HEK293 (cell line): ENCODE measurements at regions of chr12 and their contacts with region 1.

Region 1: GRCh38 chr12:8609061-8609570 is 3.5 kb downstream of the AICDA start:
- H3K4me3 ChIP-seq: no peak overlapping the region
- H3K27ac ChIP-seq: no peak overlapping the region
- H3K4me1 ChIP-seq: no peaks in the 10 kb centered on the region
- CTCF ChIP-seq: peak; percentile 25; the same call in 1 of the 2 replicates

Region 2: GRCh38 chr12:8554451-8555195 is 54.5 kb before region 1 on chr12:
- CTCF ChIA-PET with region 1: interaction called, 12 read pairs
- POLR2A ChIA-PET with region 1: no interaction called
- H3K4me3 ChIP-seq: no peak overlapping the region
- H3K27ac ChIP-seq: no peak overlapping the region
- H3K4me1 ChIP-seq: no peaks in the 10 kb centered on the region
- CTCF ChIP-seq: no peak

Region 3: GRCh38 chr12:8629486-8630033 is 20.4 kb after region 1 on chr12:
- CTCF ChIA-PET with region 1: interaction called, 10 read pairs
- POLR2A ChIA-PET with region 1: no interaction called
- H3K4me3 ChIP-seq: no peak overlapping the region
- H3K27ac ChIP-seq: no peak overlapping the region
- H3K4me1 ChIP-seq: no peaks in the 10 kb centered on the region
- CTCF ChIP-seq: no peak

Region 4: GRCh38 chr12:8771072-8771471 is 162.0 kb after region 1 on chr12:
- CTCF ChIA-PET with region 1: no interaction called
- POLR2A ChIA-PET with region 1: no interaction called
- H3K4me3 ChIP-seq: no peak overlapping the region
- H3K27ac ChIP-seq: no peak overlapping the region
- H3K4me1 ChIP-seq: no peaks in the 10 kb centered on the region
- CTCF ChIP-seq: no peak